ENCODE measurements at regions of chr11 and their contacts with region 1.

Region 1: DNA sequence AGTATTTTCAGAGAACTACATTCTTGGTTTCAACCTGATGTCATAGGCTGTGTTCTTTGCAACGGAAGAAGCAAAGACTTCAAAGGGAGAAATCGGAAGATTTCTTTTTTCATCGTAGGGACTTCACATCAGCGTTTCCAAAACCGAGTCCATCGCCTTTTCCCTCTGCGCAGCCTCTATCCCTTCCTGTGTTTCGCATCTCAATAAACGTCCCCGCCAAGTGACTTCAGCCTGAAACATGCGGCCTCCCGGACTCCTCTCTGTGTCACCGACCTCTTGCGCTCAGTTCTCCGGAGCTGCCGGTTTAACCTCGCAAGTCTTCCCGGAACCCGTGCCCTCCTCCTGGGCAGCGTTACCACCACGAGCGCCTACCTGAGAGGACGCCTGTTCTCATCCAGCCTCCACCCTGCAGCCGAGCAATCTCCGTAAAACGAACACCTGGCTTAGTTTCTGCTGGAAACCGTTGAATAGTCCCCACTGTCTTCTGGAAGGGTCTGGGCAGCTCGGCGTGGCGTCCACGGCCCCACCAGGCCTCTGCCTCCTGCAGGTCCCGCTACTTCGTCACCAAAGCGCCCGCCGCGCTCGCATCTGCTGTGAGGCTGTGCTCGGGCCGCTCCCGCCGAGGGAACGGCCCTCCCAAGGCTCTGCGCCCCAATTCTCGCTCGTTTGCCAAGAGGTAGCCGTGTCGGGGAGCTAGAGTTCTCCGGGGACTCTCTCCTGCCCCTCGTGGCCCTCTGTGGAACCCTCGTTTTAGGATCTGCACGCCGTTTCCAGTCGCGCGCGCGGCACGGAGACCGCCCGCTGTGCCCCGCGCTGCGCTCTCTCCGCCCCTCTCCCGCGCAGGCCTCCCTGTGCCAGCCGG is at the start of gene GLB1L3:
- DNase-seq: no peak
- H3K4me3 Mint-ChIP-seq: no peak within 1 kb of the TSS
- H3K27ac Mint-ChIP-seq: no peak within 1 kb of the TSS
- H3K4me1 Mint-ChIP-seq: no peaks in the 10 kb centered on the region
- H3K27me3 Mint-ChIP-seq: peaks cover 23% of the 10 kb centered on the region
- CTCF ChIP-seq: no peak
- total RNA-seq, gene GLB1L3: not detected in 2 replicates

Region 2: DNA sequence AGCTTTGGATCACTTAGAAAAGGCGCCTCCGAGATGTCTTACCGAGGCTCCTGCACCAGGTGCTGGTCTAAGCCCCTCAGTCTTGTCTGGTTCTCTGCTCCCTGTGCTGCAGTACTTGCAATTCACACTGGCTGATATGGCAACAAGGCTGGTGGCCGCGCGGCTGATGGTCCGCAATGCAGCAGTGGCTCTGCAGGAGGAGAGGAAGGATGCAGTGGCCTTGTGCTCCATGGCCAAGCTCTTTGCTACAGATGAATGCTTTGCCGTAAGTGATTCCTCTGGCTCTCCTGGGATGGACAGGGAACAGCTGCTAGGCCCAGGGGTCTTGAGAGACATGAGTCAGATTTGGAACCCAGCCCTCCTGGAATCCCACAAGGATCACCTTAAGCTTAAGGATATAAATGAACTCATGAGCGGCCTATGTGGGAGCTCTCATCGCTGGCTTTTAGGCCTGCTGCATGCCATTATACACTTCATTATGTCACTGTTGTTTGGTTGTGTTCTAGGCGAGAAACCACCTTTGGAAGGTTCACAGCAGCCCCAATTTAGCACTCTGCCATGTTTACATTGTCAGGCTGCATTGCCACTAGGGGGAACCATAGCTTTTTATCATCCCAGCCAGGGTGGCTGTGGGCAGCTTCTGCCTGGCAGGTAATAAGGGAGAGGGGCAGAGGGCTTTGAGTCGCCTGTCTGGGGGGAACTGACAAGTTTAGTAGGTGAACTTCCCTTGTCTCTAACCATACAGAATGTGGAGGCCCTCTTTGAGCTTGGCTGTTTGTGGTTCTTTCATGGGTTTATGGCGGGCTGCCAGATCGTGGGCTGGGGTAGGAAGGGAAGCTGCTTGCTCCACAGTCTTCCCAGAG is 13.9 kb before region 1 on chr11:
- CTCF ChIA-PET with region 1: interaction called, 14 read pairs
- POLR2A ChIA-PET with region 1: no interaction called
- intact Hi-C with region 1: no loop called
- DNase-seq: peak; percentile 54
- H3K4me3 Mint-ChIP-seq: no peak overlapping the region
- H3K27ac Mint-ChIP-seq: no peak overlapping the region
- H3K4me1 Mint-ChIP-seq: peaks cover 8% of the 10 kb centered on the region
- H3K27me3 Mint-ChIP-seq: no peaks in the 10 kb centered on the region
- CTCF ChIP-seq: peak; percentile 48

Region 3: GRCh38 chr11:134343646-134344045 is 67.9 kb after region 1 on chr11:
- CTCF ChIA-PET with region 1: interaction called, 3 read pairs
- POLR2A ChIA-PET with region 1: no interaction called
- intact Hi-C with region 1: loop called (anchors 2 kb)
- DNase-seq: no peak
- H3K4me3 Mint-ChIP-seq: no peak overlapping the region
- H3K27ac Mint-ChIP-seq: no peak overlapping the region
- H3K4me1 Mint-ChIP-seq: peaks cover 9% of the 10 kb centered on the region
- H3K27me3 Mint-ChIP-seq: no peaks in the 10 kb centered on the region
- CTCF ChIP-seq: no peak

Region 4: DNA sequence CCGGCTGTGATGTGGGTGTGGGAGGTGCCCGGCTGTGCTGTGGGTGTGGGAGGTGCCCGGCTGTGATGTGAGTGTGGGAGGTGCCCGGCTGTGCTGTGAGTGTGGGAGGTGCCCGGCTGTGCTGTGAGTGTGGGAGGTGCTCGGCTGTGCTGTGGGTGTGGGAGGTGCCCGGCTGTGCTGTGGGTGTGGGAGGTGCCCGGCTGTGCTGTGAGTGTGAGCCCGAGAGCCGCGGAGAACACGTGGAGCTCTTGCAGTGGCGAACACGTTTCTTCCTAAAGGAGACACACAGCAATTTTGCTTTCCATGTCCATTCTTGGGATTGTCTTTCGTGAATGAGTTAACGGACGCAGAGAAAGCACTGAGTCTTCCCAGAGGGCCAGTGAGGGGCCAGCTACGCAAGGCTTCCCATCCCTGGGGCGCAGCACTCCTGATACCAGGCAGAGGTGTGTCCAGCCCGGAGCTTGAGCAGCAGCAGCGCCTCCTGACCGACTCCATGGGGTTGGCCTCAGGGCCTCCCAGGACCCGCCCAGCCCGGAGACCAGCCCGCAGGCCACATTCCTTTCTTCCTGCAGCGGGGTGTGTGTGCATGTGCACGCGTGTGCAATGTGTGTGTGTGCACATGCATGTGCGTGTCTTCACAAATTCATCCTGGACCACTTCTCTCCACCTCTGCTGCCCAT is 381.2 kb after region 1 on chr11:
- CTCF ChIA-PET with region 1: no interaction called
- POLR2A ChIA-PET with region 1: no interaction called
- intact Hi-C with region 1: no loop called
- DNase-seq: no peak
- H3K4me3 Mint-ChIP-seq: no peak overlapping the region
- H3K27ac Mint-ChIP-seq: no peak overlapping the region
- H3K4me1 Mint-ChIP-seq: no peaks in the 10 kb centered on the region
- H3K27me3 Mint-ChIP-seq: no peaks in the 10 kb centered on the region
- CTCF ChIP-seq: no peak